ENCODE measurements at regions of chr12 and their contacts with region 1.

Region 1: GRCh38 chr12:32302218-32303173 is 96.9 kb upstream of the FGD4 start:
- DNase-seq: peak; percentile 56
- H3K4me3 ChIP-seq: no peak overlapping the region
- H3K27ac ChIP-seq: no peak overlapping the region
- H3K4me1 ChIP-seq: no peaks in the 10 kb centered on the region
- H3K27me3 ChIP-seq: no peaks in the 10 kb centered on the region
- CTCF ChIP-seq: peak; percentile 58 to 61
- POLR2A ChIP-seq: no peak

Region 2: DNA sequence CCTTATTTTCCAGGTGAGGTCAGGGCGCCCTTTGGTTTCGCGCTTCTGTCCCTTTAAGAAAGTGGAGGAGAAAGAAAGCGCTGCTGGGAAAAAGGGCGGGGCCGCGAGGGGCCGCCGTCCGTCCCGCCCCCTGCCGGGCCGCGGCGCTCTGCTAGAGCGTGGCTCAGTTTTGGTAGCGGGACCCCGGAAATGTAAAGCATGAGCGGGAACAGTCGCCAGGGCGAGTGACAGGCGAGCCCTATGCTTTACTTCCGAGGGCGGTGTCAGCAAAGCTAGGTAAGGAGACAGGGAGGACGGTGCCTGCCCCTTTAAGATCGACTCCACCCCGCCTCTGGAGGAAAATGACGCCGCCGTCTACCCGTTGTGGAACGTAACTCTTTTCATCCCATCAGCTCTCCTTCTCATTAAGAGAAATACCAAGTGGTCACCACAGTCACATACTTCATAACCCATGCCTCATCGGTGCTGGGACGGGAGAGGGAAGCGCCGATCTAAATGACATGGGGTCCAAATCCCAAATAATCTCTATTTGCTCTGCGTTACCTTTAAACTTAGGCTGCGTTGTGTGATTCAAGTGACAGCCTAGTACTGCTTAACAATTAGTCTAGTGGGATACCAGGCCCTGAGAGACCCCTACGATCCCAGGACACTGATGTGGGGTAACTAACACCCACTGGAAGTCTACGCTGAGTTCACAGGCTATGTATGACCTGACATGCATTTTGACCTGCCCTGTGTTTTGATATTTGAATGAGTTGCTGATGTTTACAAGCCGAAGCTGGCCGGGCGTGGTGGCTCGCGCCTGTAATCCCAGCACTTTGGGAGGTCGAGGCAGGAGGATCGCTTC is 643.2 kb before region 1 on chr12 and contains the start of gene ETFBKMT:
- CTCF ChIA-PET with region 1: no interaction called
- POLR2A ChIA-PET with region 1: no interaction called
- dilution Hi-C with region 1: no loop called
- intact Hi-C with region 1: loop called (anchors 1 kb)
- DNase-seq: peak; percentile 89
- H3K4me3 ChIP-seq: peak within 1 kb of the TSS; percentile 75 to 87 (median 81)
- H3K27ac ChIP-seq: peak within 1 kb of the TSS; percentile 87
- H3K4me1 ChIP-seq: peaks cover 4% of the 10 kb centered on the region
- H3K27me3 ChIP-seq: no peaks in the 10 kb centered on the region
- CTCF ChIP-seq: peak; percentile 30 to 38
- POLR2A ChIP-seq: peak; percentile 86
- total RNA-seq, gene ETFBKMT: 2.4 and 3.1 TPM in 2 replicates

Region 3: GRCh38 chr12:31682136-31682962 is 620.1 kb before region 1 on chr12:
- CTCF ChIA-PET with region 1: interaction called, 5 read pairs
- POLR2A ChIA-PET with region 1: no interaction called
- dilution Hi-C with region 1: no loop called
- intact Hi-C with region 1: loop called (anchors 1 kb)
- DNase-seq: peak; percentile 87
- H3K4me3 ChIP-seq: no peak overlapping the region
- H3K27ac ChIP-seq: no peak overlapping the region
- H3K4me1 ChIP-seq: no peaks in the 10 kb centered on the region
- H3K27me3 ChIP-seq: no peaks in the 10 kb centered on the region
- CTCF ChIP-seq: peak; percentile 69 to 71
- POLR2A ChIP-seq: no peak

Region 4: DNA sequence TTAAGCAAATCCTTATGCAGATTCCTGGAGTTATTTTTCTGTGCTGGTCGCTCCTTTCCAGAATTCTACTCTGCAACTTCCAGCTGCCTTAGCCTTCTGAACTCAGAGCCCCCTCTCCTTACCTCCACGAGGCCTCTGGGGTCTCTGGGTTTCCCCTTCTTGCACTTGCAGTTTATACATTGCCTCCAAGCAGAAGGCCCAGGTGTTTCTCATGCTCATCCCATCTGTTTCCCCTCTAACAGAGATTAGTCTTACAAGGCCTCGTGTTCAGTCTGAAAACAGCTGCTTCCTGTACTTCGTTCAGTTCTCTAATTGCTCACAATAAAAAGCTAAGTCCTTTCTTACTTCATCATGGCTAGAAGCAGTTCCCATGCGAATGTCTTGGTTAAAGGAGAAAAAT is 37.5 kb before region 1 on chr12:
- CTCF ChIA-PET with region 1: no interaction called
- POLR2A ChIA-PET with region 1: no interaction called
- dilution Hi-C with region 1: no loop called
- intact Hi-C with region 1: loop called (anchors 5 kb)
- DNase-seq: peak; percentile 86
- H3K4me3 ChIP-seq: no peak overlapping the region
- H3K27ac ChIP-seq: peak overlapping the region; percentile 43
- H3K4me1 ChIP-seq: peaks cover 13% of the 10 kb centered on the region
- H3K27me3 ChIP-seq: no peaks in the 10 kb centered on the region
- CTCF ChIP-seq: no peak
- POLR2A ChIP-seq: no peak